Esophagus muscularis mucosa (tissue), 4 donors: ENCODE measurements at regions of chr1 and their contacts with region 1.

Region 1: DNA sequence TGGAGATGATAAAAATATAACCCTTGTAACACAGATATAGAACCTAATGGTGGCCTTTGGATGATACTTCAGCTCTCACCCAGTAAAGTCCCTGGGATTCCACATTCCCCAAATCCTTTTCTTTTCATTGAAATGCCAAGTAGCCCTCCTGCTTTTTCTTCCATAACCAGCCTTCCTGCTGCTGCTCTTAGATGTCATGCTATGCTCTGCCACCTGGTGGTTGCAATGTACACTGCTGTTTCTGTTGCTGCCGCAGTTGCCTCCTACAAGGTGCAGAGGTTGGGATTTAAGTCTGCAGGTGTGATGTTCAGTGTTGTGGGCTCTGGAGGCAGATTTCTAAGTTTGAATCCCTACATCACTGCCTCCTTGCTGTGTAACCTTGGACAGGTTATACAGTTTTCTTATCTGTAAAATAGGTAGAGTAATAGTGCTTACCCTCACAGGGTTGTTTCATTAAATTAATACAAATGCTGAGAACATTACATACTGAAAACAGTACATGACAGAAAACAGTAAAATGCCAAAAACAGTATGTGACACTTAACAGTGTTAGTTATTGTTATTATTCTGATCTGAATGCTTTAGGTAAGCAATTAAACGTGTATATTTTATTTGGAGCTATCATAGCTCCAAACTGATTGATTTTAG is 64.3 kb downstream of the CAMSAP2 start:
- DNase-seq: peak; percentile 93
- H3K4me3 ChIP-seq: no peak overlapping the region
- H3K27ac ChIP-seq: peak overlapping the region in 1 of 4 donors; percentile 14
- H3K4me1 ChIP-seq: peaks cover 0 to 13% (median 10%) of the 10 kb centered on the region in 4 donors
- H3K27me3 ChIP-seq: no peaks in the 10 kb centered on the region
- CTCF ChIP-seq: peak; percentile 92 to 95 (median 93)
- EP300 ChIP-seq: no peak
- POLR2A ChIP-seq: no peak

Region 2: DNA sequence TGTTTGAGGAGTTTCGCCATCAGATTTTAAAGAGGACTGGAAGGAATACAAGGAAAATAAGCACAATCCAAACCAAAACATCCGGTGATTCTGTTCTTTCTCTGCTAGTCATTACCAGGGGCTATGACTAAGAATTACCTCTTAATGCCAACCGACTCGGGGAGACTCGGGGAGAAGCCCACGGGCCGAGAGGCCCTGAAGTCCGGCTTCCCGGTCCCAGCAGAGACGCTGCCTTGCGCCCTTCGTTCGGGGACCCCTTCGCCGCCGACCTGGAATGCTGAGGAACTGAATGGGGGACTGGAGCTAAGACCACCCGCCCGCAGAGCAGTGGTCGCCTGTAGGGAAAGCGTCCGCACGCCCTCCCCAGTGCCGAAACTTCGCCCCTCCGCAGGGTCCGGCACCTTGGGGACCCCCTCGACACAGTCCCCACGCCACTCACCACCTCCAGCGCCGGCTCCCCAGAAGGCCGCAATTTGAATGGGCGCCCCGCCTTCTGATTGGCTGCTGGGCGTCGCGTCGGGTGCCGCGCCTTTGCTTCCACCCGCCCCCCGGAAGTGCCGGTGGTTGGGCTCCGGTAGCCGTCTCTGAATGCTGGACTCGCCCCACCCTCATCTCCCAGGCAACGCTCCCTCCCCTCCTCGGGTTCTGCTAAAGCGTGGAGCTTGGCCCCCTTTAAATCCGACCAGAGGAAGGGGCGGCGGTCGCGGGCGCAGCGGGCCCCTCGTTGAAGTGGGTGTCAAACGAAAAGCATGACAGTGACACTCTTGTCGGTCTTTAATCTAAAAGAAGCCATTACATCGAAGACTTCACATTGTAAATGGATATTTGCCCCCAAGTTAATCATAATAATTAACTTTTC is 182.5 kb before region 1 on chr1 and contains the start of gene KIF14:
- intact Hi-C with region 1: loop called (anchors 2 kb)
- DNase-seq: peak; percentile 97
- H3K4me3 ChIP-seq: peak within 1 kb of the TSS; percentile 63 to 77 (median 71)
- H3K27ac ChIP-seq: peak within 1 kb of the TSS; percentile 29 to 65 (median 50)
- H3K4me1 ChIP-seq: peaks cover 12 to 34% (median 22%) of the 10 kb centered on the region in 4 donors
- H3K27me3 ChIP-seq: peaks cover 0 to 4% (median 0%) of the 10 kb centered on the region in 4 donors
- CTCF ChIP-seq: no peak
- EP300 ChIP-seq: no peak
- POLR2A ChIP-seq: no peak
- total RNA-seq, gene KIF14: under 0.01 to 0.17 (median 0.17) TPM in 3 of 4 donors, not detected in the other

Region 3: GRCh38 chr1:201295861-201296260 is 492.9 kb after region 1 on chr1:
- intact Hi-C with region 1: no loop called
- DNase-seq: no peak
- H3K4me3 ChIP-seq: no peak overlapping the region
- H3K27ac ChIP-seq: no peak overlapping the region
- H3K4me1 ChIP-seq: peaks cover 0 to 3% (median 0%) of the 10 kb centered on the region in 4 donors
- H3K27me3 ChIP-seq: peaks cover 0 to 22% (median 0%) of the 10 kb centered on the region in 4 donors
- CTCF ChIP-seq: no peak
- EP300 ChIP-seq: no peak
- POLR2A ChIP-seq: no peak